PC-9 (cell line): ENCODE measurements at regions of chr1 and their contacts with region 1.

Region 1: DNA sequence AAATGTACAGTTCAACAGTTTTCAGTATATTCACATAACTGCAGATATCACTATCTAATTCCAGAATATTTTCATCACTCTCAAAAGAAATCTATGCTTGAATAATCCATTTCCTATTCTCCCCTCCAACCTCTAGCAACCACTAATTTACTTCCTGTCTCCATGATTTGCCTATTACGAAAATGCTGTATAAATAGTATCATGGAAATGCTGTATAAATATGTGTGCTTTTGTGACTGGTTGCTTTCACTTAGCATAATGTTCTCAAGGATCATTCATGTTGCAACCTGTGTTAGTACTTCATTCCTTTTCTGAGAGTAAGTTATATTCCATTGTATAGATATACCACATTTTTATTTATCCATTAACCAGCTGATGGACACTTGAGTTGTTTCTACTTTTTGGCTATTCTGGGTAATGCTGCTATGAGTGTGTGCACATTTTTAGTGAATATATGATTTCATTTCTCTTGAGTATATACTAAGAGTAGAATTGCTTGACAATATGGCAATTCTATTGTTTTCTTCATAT is 115.6 kb downstream of the TNFSF18 start:
- DNase-seq: no peak
- H3K4me3 ChIP-seq: no peak overlapping the region
- H3K27ac ChIP-seq: peak overlapping the region; percentile 85; the same call in 1 of the 2 replicates
- H3K4me1 ChIP-seq: peaks cover 34% of the 10 kb centered on the region
- H3K27me3 ChIP-seq: no peaks in the 10 kb centered on the region
- CTCF ChIP-seq: no peak

Region 2: GRCh38 chr1:173056380-173056779 is 121.3 kb after region 1 on chr1:
- CTCF ChIA-PET with region 1: no interaction called
- POLR2A ChIA-PET with region 1: interaction called, 5 read pairs
- intact Hi-C with region 1: loop called (anchors 5 kb)
- DNase-seq: peak; percentile 56 to 94
- H3K4me3 ChIP-seq: no peak overlapping the region
- H3K27ac ChIP-seq: peak overlapping the region; percentile 64
- H3K4me1 ChIP-seq: peaks cover 39% of the 10 kb centered on the region
- H3K27me3 ChIP-seq: no peaks in the 10 kb centered on the region
- CTCF ChIP-seq: no peak

Region 3: GRCh38 chr1:173122958-173123852 is 188.1 kb after region 1 on chr1:
- CTCF ChIA-PET with region 1: no interaction called
- POLR2A ChIA-PET with region 1: no interaction called
- intact Hi-C with region 1: loop called (anchors 5 kb)
- DNase-seq: peak; percentile 69
- H3K4me3 ChIP-seq: no peak overlapping the region
- H3K27ac ChIP-seq: peak overlapping the region; percentile 54
- H3K4me1 ChIP-seq: peaks cover 15% of the 10 kb centered on the region
- H3K27me3 ChIP-seq: no peaks in the 10 kb centered on the region
- CTCF ChIP-seq: no peak

Region 4: GRCh38 chr1:173202430-173203145 is 267.5 kb after region 1 on chr1:
- CTCF ChIA-PET with region 1: no interaction called
- POLR2A ChIA-PET with region 1: no interaction called
- intact Hi-C with region 1: loop called (anchors 5 kb)
- DNase-seq: peak in 1 of 2 experiments; percentile 33
- H3K4me3 ChIP-seq: no peak overlapping the region
- H3K27ac ChIP-seq: no peak overlapping the region
- H3K4me1 ChIP-seq: no peaks in the 10 kb centered on the region
- H3K27me3 ChIP-seq: no peaks in the 10 kb centered on the region
- CTCF ChIP-seq: peak; percentile 78

Region 5: DNA sequence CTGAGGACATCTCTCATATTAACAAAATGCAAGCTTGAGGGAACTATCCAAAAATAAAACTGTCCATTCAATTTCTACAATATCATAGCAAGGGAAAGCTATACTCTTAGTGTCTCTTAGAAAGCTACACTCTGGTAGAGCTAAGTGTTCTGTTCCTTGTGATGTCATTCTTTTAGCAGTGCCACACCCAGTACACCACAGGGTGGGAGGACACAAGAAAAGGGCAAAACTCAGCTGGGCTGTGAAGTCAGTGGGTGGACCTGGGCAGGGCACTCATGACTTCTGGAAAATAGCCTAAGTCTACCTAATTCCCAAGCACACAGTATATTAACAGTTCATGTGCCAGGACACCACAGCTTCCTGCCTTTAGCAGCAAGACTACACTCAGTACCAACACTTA is 314.2 kb after region 1 on chr1:
- CTCF ChIA-PET with region 1: no interaction called
- POLR2A ChIA-PET with region 1: no interaction called
- intact Hi-C with region 1: no loop called
- DNase-seq: no peak
- H3K4me3 ChIP-seq: no peak overlapping the region
- H3K27ac ChIP-seq: no peak overlapping the region
- H3K4me1 ChIP-seq: no peaks in the 10 kb centered on the region
- H3K27me3 ChIP-seq: no peaks in the 10 kb centered on the region
- CTCF ChIP-seq: no peak